Endothelial cell of umbilical vein (primary cell): ENCODE measurements at regions of chr9 and their contacts with region 1.

Region 1: GRCh38 chr9:36110434-36110833 is 26.1 kb upstream of the GLIPR2 start:
- DNase-seq: no peak
- H3K4me3 ChIP-seq: no peak overlapping the region
- H3K27ac ChIP-seq: no peak overlapping the region
- H3K4me1 ChIP-seq: no peaks in the 10 kb centered on the region
- H3K27me3 ChIP-seq: no peaks in the 10 kb centered on the region
- CTCF ChIP-seq: no peak
- POLR2A ChIP-seq: no peak

Region 2: DNA sequence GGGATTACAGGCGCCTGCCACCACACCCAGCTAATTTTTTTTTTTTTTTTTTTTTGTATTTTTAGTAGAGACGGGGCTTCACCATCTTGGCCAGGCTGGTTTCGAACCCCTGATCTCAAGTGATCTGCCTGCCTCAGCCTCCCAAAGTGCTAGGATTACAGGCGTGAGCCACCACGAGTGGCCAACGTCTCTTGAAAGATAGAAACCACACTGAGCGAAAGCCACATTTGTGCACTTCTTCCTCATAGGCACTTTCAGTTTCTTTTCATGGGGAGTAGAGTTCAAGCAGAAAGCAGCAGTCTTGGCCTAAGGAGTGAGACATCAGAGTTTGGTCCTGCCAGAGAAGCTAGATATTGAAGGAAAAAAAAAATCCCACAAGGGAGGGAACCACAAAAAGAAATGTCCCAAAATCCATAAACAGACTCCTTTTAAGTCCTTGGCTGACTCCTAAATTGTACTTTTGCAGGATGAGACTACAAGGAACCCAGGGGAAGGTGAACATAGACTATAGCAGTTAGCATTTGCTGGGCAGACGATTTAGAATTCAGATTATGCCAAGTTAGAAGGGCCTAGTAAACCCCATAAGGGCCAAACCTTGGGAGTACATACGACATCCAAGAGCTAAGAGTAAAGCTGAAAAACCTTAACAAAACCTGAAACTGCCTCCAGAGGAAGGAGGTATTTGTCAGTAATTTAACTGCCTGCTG is 17.8 kb before region 1 on chr9:
- CTCF ChIA-PET with region 1: no interaction called
- POLR2A ChIA-PET with region 1: no interaction called
- dilution Hi-C with region 1: no loop called
- intact Hi-C with region 1: no loop called
- DNase-seq: no peak
- H3K4me3 ChIP-seq: no peak overlapping the region
- H3K27ac ChIP-seq: no peak overlapping the region
- H3K4me1 ChIP-seq: peaks cover 18% of the 10 kb centered on the region
- H3K27me3 ChIP-seq: no peaks in the 10 kb centered on the region
- CTCF ChIP-seq: no peak
- POLR2A ChIP-seq: no peak

Region 3: DNA sequence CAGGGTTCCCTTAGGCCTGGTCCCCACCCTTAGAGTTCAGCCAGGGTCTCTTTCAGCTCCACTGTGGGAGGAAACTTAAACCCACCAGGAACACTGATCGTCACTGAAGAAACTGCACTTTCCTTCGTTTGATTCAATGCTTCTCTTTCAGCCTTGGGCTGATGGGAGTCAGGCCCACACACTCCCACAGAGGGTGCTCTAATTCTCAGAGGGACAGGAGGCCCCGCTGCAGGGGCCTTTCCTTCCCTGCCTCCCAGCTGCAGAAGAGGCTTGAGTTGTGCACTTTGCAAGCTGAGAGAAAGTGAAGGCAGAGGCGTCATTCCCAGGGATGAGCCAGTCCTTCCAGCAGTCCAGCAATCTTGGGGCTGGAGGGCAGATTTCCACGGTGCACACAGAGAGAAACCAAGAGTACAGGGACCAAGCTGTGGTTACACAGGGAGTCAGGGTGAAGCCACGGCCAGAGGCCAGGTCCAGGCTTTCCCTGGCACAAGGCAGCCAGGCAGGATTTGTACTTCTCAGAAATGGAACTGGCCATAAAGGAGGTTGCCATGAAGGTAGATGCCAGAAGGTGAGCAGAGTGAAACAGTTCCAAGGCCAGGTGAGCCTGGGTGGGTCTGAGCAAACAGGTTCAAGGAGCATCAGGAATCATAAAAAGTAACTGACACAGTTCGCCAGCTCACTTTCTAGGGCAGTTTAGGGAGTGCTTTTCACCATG is 15.7 kb after region 1 on chr9:
- CTCF ChIA-PET with region 1: interaction called, 14 read pairs
- POLR2A ChIA-PET with region 1: no interaction called
- dilution Hi-C with region 1: no loop called
- intact Hi-C with region 1: no loop called
- DNase-seq: no peak
- H3K4me3 ChIP-seq: no peak overlapping the region
- H3K27ac ChIP-seq: no peak overlapping the region
- H3K4me1 ChIP-seq: no peaks in the 10 kb centered on the region
- H3K27me3 ChIP-seq: no peaks in the 10 kb centered on the region
- CTCF ChIP-seq: no peak
- POLR2A ChIP-seq: no peak

Region 4: DNA sequence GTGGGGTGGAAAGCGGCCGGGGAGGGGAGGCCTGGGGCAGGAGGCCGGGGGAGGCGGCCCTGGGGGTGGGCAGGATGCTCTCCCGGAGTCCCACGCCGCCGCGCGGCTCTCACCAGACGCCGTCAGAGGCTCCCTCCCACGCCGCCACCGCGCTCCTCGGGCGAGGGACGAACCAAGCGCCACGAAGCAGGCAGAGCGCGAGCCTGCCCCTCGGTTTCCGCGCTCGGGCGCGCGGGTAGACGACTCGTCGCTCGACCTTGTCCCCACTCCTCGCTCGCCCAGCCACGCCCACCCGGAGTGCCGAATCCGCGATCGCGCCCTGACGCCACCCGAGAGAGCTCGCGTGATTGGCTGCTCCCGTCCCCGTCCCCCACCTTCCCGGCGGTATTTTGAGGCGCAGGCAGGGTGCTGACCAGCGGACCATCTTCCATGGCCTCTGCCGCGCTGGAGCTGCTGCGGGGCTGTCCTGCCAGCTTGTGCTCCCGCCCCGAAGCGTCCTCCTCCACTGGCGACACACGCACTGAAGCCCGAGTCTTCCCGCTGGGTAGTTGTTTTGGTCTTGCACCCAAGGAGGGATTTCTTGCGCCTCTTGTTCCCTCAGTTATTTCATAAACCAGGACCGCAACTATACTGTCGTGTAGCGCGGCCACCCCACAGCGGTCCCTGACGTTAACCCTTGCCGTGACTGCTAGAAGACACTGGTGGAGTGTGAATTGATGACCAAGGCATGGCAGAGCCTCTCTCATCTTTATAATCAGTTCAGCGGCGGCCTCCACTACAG is 148.0 kb after region 1 on chr9 and contains the start of gene GNE:
- CTCF ChIA-PET with region 1: no interaction called
- POLR2A ChIA-PET with region 1: no interaction called
- dilution Hi-C with region 1: no loop called
- intact Hi-C with region 1: no loop called
- DNase-seq: peak; percentile 95
- H3K4me3 ChIP-seq: peak within 1 kb of the TSS; percentile 65 to 84 (median 66)
- H3K27ac ChIP-seq: peak within 1 kb of the TSS; percentile 44
- H3K4me1 ChIP-seq: peaks cover 4% of the 10 kb centered on the region
- H3K27me3 ChIP-seq: no peaks in the 10 kb centered on the region
- CTCF ChIP-seq: no peak
- POLR2A ChIP-seq: peak; percentile 83
- total RNA-seq, gene GNE: 11.4 and 12.3 TPM in 2 replicates